KBM-7 (cell line): ENCODE measurements at regions of chr15 and their contacts with region 1.

Region 1: DNA sequence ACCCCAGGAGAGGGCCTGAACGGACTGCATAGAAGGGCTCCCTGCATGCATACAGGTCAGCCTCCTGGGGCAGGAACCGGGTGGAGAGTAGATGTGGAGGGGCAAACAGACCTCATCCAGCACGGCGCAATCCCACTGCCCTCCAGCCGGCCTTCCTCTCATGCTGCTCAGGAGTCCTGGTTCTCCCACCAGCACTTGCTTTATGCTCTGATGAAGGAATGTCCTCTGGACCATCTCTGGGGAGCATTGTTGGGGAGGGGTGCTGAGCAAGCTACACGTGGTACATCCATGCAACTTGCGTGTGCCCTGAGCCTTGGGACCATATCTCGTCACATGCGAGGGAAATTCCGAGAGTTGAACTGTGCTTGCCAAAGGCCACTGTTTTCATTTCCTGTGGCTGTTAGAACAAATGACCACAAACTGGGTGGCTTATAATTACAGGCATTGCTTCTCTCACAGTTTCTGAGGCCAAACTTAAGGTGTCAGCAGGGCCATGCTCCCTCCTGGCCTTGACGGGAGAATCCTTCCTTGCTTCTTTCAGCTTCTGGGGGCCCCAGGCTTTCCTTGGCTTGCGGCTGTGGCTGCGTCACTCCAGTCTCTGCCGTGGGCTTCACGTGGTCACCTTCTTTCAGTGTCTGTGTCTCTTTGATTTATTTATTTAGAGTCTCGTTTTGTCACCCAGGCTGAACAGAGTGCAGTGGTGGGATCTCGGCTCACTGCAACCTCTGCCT is 12.2 kb downstream of the SELENOS start:
- DNase-seq: no peak

Region 2: GRCh38 chr15:101027273-101027901 is 237.7 kb before region 1 on chr15:
- in situ Hi-C with region 1: loop called (anchors 5 kb)
- DNase-seq: no peak